ENCODE measurements at regions of chr11 and their contacts with region 1.

Region 1: DNA sequence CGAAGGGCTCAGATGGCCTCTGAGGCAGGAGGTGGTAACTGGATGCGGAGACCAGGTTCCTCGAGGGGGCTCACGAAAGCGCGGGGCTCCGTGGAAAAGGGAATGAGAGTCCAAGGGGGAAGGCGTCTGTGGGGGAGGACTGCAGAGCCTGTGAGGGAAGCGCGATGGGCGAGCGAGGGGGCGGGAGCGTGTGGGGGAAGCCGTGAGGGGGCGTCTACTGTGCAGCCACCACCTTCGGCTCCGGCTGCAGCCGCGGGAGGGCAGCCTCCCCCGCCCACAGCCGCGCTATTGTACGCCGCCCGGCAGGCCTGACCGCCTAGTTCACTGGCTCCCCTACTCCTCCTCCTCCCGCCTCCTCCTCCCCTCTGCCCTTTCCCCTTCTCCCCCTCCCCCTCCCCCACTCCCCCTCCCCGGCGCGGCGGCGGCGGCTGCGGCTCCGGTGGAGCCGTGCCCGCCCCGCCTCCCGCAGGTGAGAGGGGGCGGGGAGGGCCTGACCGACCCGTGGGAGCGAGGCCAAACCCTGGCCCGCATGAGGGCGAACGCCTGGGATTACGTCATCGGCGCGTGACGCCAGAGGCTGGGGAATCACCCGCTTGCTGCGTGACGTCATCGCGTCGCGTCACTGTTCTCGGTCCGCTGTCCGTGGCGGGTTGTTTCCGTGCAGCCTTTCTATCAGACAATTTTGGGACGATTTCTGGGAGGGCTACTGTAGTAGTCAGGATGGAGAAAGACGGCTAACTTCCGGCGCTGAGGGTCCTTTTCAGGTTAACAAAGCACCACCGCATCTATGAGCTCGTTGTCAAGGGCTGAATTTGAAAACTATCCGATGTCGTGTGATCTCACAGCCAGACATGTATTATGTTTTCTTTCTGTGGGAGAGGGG is at the start of gene PAK1:
- DNase-seq: peak; percentile 75 to 94
- H3K4me3 ChIP-seq: peak within 1 kb of the TSS; percentile 82 to 90 (median 84)
- H3K27ac ChIP-seq: peak within 1 kb of the TSS; percentile 61; the same call in 1 of the 2 replicates
- H3K4me1 ChIP-seq: peaks cover 4 to 20% (median 12%) of the 10 kb centered on the region in 4 experiments
- H3K27me3 ChIP-seq: no peaks in the 10 kb centered on the region
- CTCF ChIP-seq: peak; percentile 12 to 24 (median 12)
- EP300 ChIP-seq: no peak
- POLR2A ChIP-seq: peak; percentile 33 to 76
- RAD21 ChIP-seq: peak; percentile 43 to 51; a peak in 3 of 4 replicates
- total RNA-seq, gene PAK1: 142 and 151 TPM in 2 replicates

Region 2: DNA sequence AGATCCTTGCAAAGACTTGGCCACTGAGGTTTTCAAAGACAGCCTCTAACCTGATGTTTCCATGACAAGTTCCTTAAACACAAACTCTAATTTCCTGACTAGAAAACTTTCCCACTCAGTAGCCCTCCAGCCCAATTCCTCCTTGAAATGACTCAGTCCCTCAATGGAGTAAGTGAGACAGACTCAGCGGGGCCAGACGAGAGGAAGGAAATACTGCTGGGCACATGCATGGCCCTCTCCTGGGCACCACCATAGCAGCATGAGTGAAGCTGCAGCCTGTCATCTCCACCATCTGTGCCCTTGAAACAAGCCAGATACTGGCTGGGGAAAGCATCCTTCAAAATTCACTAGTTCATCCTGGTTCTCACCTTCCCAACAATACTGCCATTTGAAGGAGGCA is 96.3 kb before region 1 on chr11:
- CTCF ChIA-PET with region 1: no interaction called
- POLR2A ChIA-PET with region 1: no interaction called
- DNase-seq: no peak
- H3K4me3 ChIP-seq: no peak overlapping the region
- H3K27ac ChIP-seq: no peak overlapping the region
- H3K4me1 ChIP-seq: no peaks in the 10 kb centered on the region
- H3K27me3 ChIP-seq: no peaks in the 10 kb centered on the region
- CTCF ChIP-seq: no peak
- EP300 ChIP-seq: no peak
- POLR2A ChIP-seq: no peak
- RAD21 ChIP-seq: no peak

Region 3: DNA sequence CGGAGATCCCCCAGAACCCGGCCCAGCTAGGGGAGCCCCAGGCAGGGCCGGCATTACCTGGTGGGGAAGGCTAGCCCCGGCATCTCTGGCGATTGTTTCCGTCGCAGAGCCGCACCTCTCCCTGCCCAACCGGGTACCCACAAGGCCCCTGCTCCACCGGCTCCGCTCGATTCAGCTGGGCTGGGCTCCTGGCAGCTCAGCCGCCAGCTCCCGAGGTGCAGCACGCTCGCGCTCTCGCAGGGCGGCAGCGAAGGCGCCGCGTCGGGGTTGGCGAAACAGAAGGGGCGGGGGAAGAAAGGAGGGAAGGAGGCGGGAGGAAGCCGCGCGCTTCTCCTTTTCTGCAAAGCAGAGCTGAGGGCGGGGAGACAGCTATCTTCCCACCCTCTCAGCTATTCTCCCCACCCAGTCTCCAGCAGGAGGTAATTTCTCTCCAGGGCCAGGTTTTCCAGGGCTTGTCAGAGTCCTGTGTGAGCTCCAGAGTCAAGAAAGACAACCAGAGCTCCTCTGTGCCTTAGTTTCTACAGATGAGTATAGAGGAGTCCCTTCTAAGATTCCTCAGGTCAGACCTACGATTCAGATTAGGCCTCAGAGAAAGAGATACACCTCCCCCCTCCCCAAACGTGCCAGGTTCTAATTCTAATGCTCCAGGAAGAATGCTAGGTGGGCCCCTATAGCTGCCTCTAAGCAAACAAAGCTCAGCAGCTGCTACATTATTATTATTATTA is 62.2 kb before region 1 on chr11:
- CTCF ChIA-PET with region 1: interaction called, 14 read pairs
- POLR2A ChIA-PET with region 1: interaction called, 21 read pairs
- DNase-seq: peak; percentile 57 to 84
- H3K4me3 ChIP-seq: peak overlapping the region; percentile 61 to 83 (median 66)
- H3K27ac ChIP-seq: peak overlapping the region; percentile 20; the same call in 1 of the 2 replicates
- H3K4me1 ChIP-seq: peaks cover 0 to 22% (median 15%) of the 10 kb centered on the region in 4 experiments; a peak in 5 of 7 replicates
- H3K27me3 ChIP-seq: no peaks in the 10 kb centered on the region
- CTCF ChIP-seq: no peak
- EP300 ChIP-seq: no peak
- POLR2A ChIP-seq: peak in 1 of 2 experiments; percentile 60; a peak in 2 of 3 replicates
- RAD21 ChIP-seq: peak in 1 of 2 experiments; percentile 45; a peak in 3 of 4 replicates

Region 4: DNA sequence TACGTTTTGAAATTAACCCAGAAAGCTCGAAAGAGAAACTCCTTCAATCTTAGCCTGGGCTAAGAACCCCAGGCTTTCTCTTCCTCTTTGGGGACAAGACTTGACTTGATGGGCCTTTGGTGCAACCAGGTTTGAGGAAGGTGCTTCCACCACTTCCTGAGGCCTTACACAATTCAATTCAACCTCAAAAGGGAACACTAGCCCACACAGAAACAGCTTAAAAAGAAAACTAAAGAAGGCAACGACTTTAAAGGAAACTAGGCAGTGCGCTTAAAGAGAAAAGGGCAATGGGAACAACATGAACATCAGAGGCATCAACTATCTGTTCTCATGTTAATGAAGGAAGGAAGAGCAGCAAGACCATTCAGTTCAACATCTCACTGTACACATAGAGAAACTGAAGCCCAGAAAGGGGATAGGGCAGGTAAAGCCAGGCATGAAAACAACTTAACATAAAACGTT is 25.0 kb before region 1 on chr11:
- CTCF ChIA-PET with region 1: interaction called, 9 read pairs
- POLR2A ChIA-PET with region 1: interaction called, 19 read pairs
- DNase-seq: no peak
- H3K4me3 ChIP-seq: peak overlapping the region in 1 of 4 experiments; percentile 13; a peak in 1 of 8 replicates
- H3K27ac ChIP-seq: peak overlapping the region; percentile 14; the same call in 1 of the 2 replicates
- H3K4me1 ChIP-seq: peaks cover 0 to 14% (median 8%) of the 10 kb centered on the region in 4 experiments; a peak in 5 of 7 replicates
- H3K27me3 ChIP-seq: no peaks in the 10 kb centered on the region
- CTCF ChIP-seq: no peak
- EP300 ChIP-seq: no peak
- POLR2A ChIP-seq: no peak
- RAD21 ChIP-seq: no peak

Region 5: GRCh38 chr11:77457340-77457739 is 16.7 kb before region 1 on chr11:
- CTCF ChIA-PET with region 1: interaction called, 12 read pairs
- POLR2A ChIA-PET with region 1: interaction called, 12 read pairs
- DNase-seq: no peak
- H3K4me3 ChIP-seq: peak overlapping the region in 2 of 4 experiments; percentile 1 to 24; a peak in 3 of 8 replicates
- H3K27ac ChIP-seq: no peak overlapping the region
- H3K4me1 ChIP-seq: peaks cover 2 to 25% (median 10%) of the 10 kb centered on the region in 4 experiments
- H3K27me3 ChIP-seq: no peaks in the 10 kb centered on the region
- CTCF ChIP-seq: no peak
- EP300 ChIP-seq: no peak
- POLR2A ChIP-seq: no peak
- RAD21 ChIP-seq: no peak

Region 6: GRCh38 chr11:77487790-77488189 is 13.7 kb after region 1 on chr11:
- CTCF ChIA-PET with region 1: interaction called, 4 read pairs
- POLR2A ChIA-PET with region 1: interaction called, 12 read pairs
- DNase-seq: peak in 1 of 2 experiments; percentile 28
- H3K4me3 ChIP-seq: no peak overlapping the region
- H3K27ac ChIP-seq: no peak overlapping the region
- H3K4me1 ChIP-seq: no peaks in the 10 kb centered on the region
- H3K27me3 ChIP-seq: no peaks in the 10 kb centered on the region
- CTCF ChIP-seq: no peak
- EP300 ChIP-seq: no peak
- POLR2A ChIP-seq: no peak
- RAD21 ChIP-seq: no peak

Region 7: DNA sequence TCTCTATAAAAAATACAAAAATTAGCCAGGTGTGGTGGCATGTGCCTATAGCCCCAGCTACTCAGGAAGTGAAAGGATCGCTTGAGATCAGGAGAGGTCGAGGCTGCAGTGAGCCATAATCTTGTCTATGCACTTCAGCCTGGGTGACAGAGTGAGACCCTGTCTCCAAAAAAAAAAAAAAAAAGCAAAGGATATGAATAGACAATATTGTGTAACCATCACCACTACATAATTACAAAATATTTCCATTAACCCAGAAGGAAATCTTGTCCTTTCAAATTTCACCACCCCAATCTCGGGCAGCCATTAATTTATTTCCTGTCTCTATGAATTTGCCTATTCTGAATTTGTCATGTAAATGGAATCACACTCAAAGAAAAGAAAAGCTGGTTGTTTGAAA is 325.3 kb after region 1 on chr11:
- CTCF ChIA-PET with region 1: no interaction called
- POLR2A ChIA-PET with region 1: no interaction called
- DNase-seq: no peak
- H3K4me3 ChIP-seq: no peak overlapping the region
- H3K27ac ChIP-seq: no peak overlapping the region
- H3K4me1 ChIP-seq: 0 out of 7 replicates have a peak, but pooled peaks cover 0 to 2% (median 0%) of the 10 kb centered on the region in 4 experiments
- H3K27me3 ChIP-seq: no peaks in the 10 kb centered on the region
- CTCF ChIP-seq: no peak
- EP300 ChIP-seq: no peak
- POLR2A ChIP-seq: no peak
- RAD21 ChIP-seq: no peak